AG04449 (cell line): ENCODE measurements at regions of chr16 and their contacts with region 1.

Region 1: DNA sequence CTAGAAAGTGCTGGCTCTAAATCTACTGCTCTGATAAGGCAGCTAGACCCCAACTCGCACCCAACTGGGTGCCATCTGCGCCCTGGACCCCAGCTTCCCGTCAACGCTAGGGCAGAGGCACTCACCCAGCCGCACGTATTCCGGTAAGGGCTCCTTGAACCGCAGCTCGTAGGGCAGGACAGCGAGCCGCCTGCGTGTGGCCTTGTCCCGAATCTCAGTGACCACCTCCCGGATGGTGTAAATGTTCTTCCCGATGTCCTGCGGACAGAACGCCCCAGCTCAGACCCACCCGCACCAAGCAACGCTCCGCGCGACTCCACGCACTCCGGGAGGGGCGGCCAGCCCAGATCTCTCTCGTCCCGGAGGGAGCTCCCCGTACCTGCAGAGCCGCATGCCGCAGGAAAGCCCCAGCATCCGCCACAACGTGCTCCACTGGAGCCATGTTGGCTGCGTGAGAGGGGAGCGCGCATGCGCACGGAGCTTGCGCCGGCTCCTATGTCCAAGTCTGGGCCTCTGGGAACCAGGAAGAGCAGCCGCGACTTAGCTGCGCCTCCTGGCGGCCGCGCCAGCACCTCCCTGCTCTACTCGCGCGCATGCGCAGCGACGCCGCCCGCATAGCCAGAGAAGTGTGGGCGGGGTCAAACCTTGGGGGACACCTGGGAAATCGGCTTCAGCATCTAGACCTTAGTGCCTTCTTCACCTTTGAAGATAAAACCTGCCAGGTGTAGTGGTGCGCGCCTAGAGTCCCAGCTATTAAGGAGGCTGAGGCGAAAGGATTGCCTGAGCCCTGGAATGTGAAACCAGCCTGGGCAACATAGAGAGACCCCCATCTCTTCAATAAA is at the start of gene NOB1:
- DNase-seq: peak; percentile 82
- H3K4me3 ChIP-seq: peak within 1 kb of the TSS; percentile 95
- CTCF ChIP-seq: peak; percentile 97

Region 2: GRCh38 chr16:69386596-69386995 is 368.1 kb before region 1 on chr16:
- CTCF ChIA-PET with region 1: interaction called, 21 read pairs
- POLR2A ChIA-PET with region 1: no interaction called
- DNase-seq: no peak
- H3K4me3 ChIP-seq: no peak overlapping the region
- CTCF ChIP-seq: no peak

Region 3: GRCh38 chr16:69703638-69704037 is 51.1 kb before region 1 on chr16:
- CTCF ChIA-PET with region 1: interaction called, 66 read pairs
- POLR2A ChIA-PET with region 1: no interaction called
- DNase-seq: no peak
- H3K4me3 ChIP-seq: no peak overlapping the region
- CTCF ChIP-seq: no peak

Region 4: DNA sequence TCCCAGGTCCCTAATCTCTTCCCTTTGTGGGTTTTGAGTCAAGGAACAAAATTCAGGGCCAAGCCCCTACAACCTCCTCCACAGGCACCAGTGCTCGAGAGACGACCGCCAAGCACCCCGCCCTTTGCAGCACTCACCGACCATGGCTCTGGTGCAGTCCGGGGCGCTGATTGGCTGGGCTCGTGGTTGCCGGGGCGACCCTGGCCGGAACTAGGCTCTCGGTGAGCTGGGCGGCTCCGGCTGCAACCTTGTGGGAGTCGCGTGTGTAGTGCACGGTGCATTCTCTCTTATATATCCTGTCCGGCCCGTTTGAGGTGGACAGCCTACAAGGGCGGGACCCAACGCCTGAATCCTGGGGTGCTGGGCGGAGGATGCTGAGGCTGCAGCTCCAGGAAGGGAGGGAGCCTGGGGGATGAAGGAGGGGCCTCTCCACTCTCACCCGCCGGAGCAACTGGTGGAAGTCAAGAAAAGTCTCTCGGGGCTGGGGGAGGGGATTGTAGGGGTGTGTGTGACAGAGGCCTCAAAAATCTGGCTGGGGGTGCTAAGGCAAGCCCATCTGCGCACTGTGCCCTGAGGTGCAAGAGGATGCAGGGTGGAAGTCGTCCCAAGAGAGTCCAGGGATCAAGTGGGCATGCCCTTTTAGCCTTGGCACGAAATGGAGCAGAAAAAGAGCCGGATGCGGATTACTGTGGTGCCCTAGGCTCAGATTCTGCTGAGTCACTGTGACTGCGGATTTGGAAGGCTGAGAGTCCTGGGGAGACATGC is 28.2 kb before region 1 on chr16 and contains the start of gene NQO1:
- CTCF ChIA-PET with region 1: interaction called, 69 read pairs
- POLR2A ChIA-PET with region 1: interaction called, 11 read pairs
- DNase-seq: peak; percentile 75
- H3K4me3 ChIP-seq: peak within 1 kb of the TSS; percentile 68
- CTCF ChIP-seq: no peak

Region 5: GRCh38 chr16:69767459-69768229 is 13.0 kb after region 1 on chr16:
- CTCF ChIA-PET with region 1: interaction called, 28 read pairs
- POLR2A ChIA-PET with region 1: interaction called, 3 read pairs
- DNase-seq: no peak
- H3K4me3 ChIP-seq: no peak overlapping the region
- CTCF ChIP-seq: no peak

Region 6: GRCh38 chr16:69930117-69930776 is 175.6 kb after region 1 on chr16:
- CTCF ChIA-PET with region 1: interaction called, 12 read pairs
- POLR2A ChIA-PET with region 1: no interaction called
- DNase-seq: no peak
- H3K4me3 ChIP-seq: no peak overlapping the region
- CTCF ChIP-seq: peak; percentile 71